ENCODE measurements at regions of chr16 and their contacts with region 1.

Region 1: GRCh38 chr16:11396241-11397048 is 51.2 kb downstream of the RMI2 start:
- DNase-seq: no peak
- H3K4me3 ChIP-seq: no peak overlapping the region
- H3K27ac ChIP-seq: no peak overlapping the region
- H3K4me1 ChIP-seq: peaks cover 0 to 11% (median 4%) of the 10 kb centered on the region in 4 donors
- H3K27me3 ChIP-seq: no peaks in the 10 kb centered on the region
- CTCF ChIP-seq: peak in 2 of 3 experiments; percentile 95 to 98
- EP300 ChIP-seq: no peak
- POLR2A ChIP-seq: no peak

Region 2: DNA sequence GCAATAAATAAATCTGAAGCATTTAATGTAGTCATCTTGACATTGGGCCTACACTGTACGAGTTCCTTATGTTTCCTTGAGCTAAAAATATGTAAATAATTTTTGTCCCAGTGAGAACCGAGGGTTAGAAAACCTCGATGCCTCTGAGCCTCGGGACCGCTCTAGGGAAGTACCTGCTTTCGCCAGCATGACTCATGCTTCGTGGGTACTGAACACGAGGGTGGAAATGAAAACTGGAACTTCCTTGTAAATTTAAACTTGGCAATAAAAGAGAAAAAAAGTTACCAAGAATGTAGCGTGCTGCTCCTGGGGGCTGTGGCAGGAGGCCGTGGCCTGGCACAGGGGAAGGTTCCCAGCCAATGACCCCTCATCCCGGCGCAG is 214.6 kb before region 1 on chr16:
- intact Hi-C with region 1: no loop called
- DNase-seq: no peak
- H3K4me3 ChIP-seq: no peak overlapping the region
- H3K27ac ChIP-seq: no peak overlapping the region
- H3K4me1 ChIP-seq: peaks cover 0 to 30% (median 15%) of the 10 kb centered on the region in 4 donors
- H3K27me3 ChIP-seq: no peaks in the 10 kb centered on the region
- CTCF ChIP-seq: no peak
- EP300 ChIP-seq: no peak
- POLR2A ChIP-seq: no peak

Region 3: DNA sequence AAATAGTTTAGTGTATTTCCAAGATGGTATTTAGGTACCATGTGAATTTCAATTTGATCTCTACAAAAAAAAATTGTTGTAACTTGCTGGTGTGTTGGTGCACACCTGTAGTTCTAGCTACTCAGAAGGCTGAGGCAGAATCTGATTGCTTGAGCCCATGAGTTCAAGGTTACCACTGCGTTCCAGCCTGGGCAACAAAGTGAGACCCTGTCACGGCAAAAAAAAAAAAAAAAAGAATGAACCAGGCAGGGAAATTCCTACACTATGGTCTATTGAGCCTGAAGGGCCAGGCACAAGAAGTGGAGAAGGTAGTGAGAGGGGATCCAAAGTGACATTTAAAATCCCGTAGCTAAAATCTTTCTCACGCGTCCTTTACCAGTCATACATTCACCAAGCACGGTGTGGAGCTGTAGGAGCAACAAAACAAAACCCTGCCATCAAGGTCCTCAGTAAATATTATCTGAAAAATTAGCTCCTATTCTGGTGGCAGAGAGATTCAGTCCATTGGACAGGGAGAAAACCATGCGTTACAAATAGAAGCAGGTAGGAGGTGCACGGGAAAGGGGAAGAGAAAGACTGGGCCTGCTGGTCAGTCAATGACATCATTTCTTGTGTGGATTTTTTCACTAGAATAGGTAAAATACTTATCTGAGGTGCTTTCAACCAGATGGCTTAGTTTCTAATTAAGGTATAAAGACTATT is 319.0 kb after region 1 on chr16:
- intact Hi-C with region 1: loop called (anchors 5 kb)
- DNase-seq: no peak
- H3K4me3 ChIP-seq: no peak overlapping the region
- H3K27ac ChIP-seq: no peak overlapping the region
- H3K4me1 ChIP-seq: peaks cover 9 to 41% (median 32%) of the 10 kb centered on the region in 4 donors
- H3K27me3 ChIP-seq: no peaks in the 10 kb centered on the region
- CTCF ChIP-seq: no peak
- EP300 ChIP-seq: no peak
- POLR2A ChIP-seq: no peak

Region 4: GRCh38 chr16:12067714-12068401 is 671.4 kb after region 1 on chr16:
- intact Hi-C with region 1: loop called (anchors 10 kb)
- DNase-seq: no peak
- H3K4me3 ChIP-seq: no peak overlapping the region
- H3K27ac ChIP-seq: no peak overlapping the region
- H3K4me1 ChIP-seq: peaks cover 6 to 17% (median 11%) of the 10 kb centered on the region in 4 donors
- H3K27me3 ChIP-seq: no peaks in the 10 kb centered on the region
- CTCF ChIP-seq: peak; percentile 90 to 97 (median 94)
- EP300 ChIP-seq: no peak
- POLR2A ChIP-seq: no peak